Right ventricle myocardium inferior (tissue), 1 donor: ENCODE measurements at regions of chr11 and their contacts with region 1.

Region 1: DNA sequence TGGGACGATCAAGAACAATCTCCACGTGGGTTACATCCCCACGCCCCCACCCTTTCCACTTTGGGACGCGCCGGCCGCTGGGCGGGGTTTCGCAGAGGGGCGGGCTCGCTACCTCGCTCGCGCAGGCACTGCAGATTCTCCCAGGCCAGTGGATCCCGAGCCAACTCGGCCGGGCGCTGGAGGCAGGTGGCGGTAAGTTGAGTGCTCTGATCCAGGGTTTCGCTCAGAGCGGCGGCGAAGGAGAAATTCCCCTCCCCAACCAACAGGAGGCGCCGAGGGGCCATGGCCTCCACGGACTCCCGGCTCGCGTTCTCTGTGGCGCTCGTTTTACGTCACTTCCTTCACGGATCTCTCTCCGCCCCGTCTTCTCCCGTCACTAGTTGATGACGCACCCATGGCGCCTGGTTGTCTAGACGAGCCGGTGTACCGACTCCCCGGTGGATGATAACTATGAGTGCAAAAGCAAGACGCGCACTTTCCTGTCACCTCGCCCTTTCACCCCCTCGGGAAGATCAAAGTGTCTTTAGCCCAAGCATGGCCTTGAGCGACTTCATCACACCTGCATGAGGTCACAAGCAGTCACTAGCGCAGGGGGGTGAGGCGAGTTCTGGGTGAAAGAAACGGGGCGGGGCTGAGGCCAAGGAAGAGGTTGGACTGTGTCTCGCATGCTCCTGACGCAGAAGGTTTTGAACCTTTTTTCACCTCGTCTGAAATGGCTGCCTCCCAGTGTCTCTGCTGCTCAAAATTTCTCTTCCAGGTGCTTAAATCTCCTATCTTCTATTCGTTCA is at the starts of genes CFAP68 and FDXACB1:
- DNase-seq: peak; percentile 98
- ATAC-seq: peak; percentile 95
- total RNA-seq, gene CFAP68: 27.2 TPM
- total RNA-seq, gene FDXACB1: 1.2 TPM

Region 2: DNA sequence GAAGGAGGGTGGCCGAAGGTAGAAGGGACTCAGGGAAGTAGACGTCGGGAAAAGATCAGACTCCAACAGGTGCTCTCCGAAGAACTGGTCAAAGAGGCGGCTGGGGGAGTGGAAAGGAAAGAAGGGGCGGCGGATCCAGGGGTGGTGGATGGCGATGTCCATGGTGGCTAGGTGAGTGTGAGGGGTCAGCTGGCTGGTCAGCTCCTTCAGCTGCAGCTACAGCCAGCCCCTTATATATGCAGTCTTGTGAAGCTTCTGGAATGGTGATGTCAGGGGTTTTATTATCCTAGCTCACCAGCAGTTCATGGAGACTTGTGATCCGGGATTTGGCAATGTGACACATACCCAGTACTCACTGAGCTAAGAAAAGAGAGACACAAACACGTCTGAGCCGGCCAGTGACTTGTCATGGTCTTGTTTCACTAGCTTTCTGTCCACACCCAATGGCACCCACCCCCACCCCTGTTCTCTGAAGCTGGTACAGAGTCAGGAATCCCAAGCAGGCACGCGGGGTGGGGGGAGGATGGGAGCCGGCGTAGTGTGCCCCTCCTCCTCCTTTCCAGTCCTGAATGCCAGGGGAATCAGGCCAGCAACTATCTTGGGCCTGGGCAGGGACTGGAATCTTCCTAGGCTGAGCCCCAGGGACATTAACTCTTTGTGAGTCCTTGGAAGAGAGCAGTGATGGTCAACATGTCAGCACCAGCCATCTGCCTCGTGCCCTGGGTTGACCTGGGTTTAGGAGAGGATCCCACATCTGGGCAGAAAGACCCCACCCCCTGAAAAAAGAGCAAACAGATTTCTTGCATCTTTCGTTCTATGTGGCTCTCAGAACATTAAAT is 32.7 kb after region 1 on chr11 and contains the start of gene CRYAB:
- intact Hi-C with region 1: loop called (anchors 1 kb)
- DNase-seq: peak; percentile 91
- ATAC-seq: peak; percentile 84
- total RNA-seq, gene CRYAB: 7,453 TPM

Region 3: DNA sequence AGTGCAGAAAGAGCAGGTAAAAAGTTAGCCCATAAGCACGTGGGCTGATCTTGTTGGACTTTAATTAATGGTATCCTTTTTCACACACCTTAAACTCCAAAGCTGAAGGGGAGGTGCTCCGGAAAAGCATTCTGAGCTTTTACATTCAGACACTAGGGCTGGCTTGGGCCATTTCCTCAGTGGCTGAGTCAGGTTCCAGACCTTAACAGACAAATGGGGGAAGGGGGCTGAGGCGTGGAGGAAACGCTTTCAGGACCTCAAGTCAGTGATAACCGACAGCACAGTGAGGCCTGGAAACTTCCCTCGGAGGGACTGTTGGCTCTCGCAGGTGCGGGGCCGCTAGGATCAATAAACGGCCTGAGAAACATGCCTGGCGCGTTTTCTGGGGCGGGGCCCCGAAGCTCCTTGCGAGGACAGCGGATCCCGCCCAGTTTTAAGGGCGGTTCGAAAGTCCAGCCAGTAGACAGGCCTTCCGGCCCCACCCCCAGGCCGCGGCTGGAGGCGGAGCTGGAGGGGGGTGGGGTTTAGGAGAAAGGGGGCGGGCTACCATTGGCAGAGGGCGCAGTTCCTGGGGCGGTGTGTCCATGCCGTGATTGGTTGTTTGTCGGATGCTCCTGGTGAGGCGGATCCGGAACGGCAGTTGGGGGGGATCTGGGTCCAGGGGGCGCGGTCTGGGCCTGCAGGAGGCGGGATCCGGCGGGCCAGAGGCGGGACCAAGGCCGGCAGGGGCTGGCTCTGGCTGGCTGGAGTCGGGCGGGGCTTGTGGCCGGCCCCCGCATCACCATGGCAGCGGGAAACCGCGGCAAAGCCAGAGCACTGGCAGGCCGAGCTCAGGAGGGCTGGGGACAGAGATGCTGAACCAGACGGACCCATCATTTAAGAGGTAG is 47.7 kb after region 1 on chr11:
- intact Hi-C with region 1: loop called (anchors 2 kb)
- DNase-seq: peak; percentile 98
- ATAC-seq: peak; percentile 96

Region 4: GRCh38 chr11:111977146-111978027 is 98.3 kb after region 1 on chr11:
- intact Hi-C with region 1: loop called (anchors 2 kb)
- DNase-seq: peak; percentile 79
- ATAC-seq: peak; percentile 81

Region 5: GRCh38 chr11:112024773-112025678 is 146.0 kb after region 1 on chr11 and contains the start of gene DLAT:
- intact Hi-C with region 1: loop called (anchors 1 kb)
- DNase-seq: peak; percentile 92
- ATAC-seq: peak; percentile 93
- total RNA-seq, gene DLAT: 157 TPM

Region 6: DNA sequence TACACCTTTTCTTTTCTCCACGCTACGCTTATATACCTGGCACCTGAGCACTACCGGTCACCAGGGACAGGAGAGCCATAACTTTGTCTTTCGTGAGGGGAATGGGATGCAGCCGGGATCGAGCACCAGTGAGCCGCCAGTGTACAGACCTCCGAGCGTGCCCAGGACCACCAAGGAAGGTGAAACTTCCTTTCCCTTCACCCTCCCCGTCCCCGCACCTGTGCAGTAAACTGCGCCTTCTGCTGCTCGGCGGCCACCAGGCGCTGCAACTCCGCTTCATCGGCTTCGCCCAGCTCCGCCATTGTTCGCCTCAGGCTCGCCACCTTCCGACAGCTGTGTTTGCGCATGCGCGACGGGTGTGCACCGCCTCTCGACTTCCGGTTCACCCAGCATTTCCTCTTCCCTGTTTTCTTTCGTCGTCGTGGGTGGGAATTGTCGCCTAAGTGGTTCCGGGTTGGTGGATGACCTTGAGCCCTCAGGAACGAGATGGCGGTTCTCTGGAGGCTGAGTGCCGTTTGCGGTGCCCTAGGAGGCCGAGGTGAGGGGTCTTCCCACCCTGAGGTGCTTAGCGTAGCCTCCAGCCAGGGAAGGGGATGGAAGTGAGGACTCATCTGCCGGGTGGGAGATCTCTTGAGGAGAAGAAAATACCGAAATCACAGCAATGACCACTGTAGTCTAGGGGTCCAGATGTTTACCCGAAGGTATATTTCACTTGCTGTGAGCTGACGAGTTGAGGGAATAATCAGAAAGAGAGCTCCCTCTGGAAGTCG is 207.6 kb after region 1 on chr11 and contains the starts of genes SDHD and TIMM8B:
- intact Hi-C with region 1: loop called (anchors 2 kb)
- DNase-seq: peak; percentile 96
- ATAC-seq: peak; percentile 96
- total RNA-seq, gene SDHD: 281 TPM
- total RNA-seq, gene TIMM8B: 176 TPM